ENCODE measurements at regions of chr15 and their contacts with region 1.

Region 1: DNA sequence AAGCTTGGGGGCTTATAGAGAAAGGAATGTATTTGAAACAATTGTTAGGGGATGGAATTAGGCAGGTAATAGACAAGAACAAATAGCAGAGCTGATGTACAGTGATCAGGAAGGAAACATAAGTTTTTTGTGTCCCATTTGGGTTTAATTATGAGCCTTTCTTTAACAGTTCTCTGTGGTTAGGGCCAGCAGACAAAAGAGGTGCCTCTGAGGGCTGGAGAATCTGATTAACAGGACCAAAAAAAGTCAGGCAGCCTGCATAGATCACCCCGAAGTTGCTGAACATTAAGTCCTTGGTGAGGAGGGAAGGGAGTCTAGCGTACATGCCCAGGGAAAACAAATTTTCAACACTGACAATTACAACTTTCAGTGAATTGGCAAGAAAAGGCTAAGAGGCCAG is 88.6 kb upstream of the SPRED1 start:
- DNase-seq: no peak
- H3K4me3 ChIP-seq: no peak overlapping the region
- H3K27ac ChIP-seq: no peak overlapping the region
- H3K4me1 ChIP-seq: peaks cover 6% of the 10 kb centered on the region
- CTCF ChIP-seq: no peak

Region 2: DNA sequence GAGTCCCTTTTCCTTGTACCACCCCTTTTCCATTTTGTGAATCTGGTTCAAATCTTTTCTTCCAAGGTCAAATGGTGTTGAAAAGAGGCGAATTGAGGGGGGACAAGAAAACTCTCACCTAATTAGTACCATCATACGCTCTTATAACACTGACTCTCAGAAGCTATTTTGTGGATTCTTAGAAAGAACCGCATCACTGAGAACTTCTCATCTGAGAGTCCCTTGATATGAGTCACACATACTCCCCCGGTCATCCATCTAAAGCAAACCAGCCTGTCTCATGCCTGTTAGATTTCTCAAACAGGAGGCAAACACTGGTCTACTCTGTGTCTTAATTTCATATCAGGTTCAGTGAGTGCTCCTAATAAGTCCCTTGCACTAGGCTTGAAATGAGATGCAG is 12.1 kb after region 1 on chr15:
- CTCF ChIA-PET with region 1: no interaction called
- POLR2A ChIA-PET with region 1: interaction called, 7 read pairs
- intact Hi-C with region 1: loop called (anchors 1 kb)
- DNase-seq: no peak
- H3K4me3 ChIP-seq: no peak overlapping the region
- H3K27ac ChIP-seq: no peak overlapping the region
- H3K4me1 ChIP-seq: no peaks in the 10 kb centered on the region
- CTCF ChIP-seq: no peak

Measured in OCI-LY7 (cell line).